Natural killer cell (primary cell): ENCODE measurements at regions of chr4 and their contacts with region 1.

Region 1: DNA sequence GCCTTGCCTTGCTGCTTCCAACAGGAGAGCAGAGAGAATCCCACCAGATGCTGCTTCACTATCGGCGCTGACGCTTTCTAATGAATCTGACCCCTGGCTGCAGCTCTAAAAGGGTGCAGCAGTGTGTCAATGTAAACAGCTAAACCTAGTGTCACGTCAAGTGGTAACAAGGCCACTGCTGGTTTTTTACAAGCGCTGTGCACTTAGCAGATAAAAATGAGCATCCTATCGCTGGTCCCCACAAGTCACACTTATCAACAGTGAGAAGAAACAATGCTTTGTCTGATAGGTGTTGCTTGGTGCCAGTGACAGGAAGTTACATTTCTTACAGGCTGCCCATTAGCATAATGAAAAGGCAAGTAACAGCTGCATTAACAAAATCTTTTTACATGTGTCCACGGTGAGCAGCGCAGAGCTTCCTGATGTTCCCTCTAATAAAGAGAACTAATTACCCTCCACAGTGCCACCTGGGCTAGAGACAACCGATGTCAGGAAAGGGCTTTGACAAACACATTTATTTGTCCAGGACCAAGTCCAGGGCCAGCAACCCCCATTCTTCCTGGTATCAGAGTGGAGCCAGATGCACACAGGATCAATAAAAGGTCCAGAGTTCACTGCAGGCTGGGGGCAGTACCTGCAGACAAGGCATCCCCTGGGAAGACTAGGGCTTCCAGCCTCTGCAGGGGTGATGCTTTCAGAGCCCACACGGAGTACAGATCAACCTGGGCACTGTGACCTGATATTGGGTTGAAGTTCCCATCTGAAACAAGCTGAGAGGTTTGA is 176.0 kb downstream of the MGST2 start:
- DNase-seq: peak; percentile 17 to 48
- ATAC-seq: peak; percentile 93 to 97 (median 96)
- H3K4me3 ChIP-seq: no peak overlapping the region
- H3K4me3 Mint-ChIP-seq: peak overlapping the region; percentile 91
- H3K27ac ChIP-seq: peak overlapping the region; percentile 57
- H3K27ac Mint-ChIP-seq: peak overlapping the region; percentile 92 to 94
- H3K4me1 ChIP-seq: peaks cover 31% of the 10 kb centered on the region
- H3K4me1 Mint-ChIP-seq: peaks cover 39 to 45% of the 10 kb centered on the region in 2 donors
- H3K27me3 ChIP-seq: no peaks in the 10 kb centered on the region
- H3K27me3 Mint-ChIP-seq: no peaks in the 10 kb centered on the region
- CTCF ChIP-seq: peak; percentile 18

Region 2: GRCh38 chr4:139530833-139531427 is 310.7 kb before region 1 on chr4:
- intact Hi-C with region 1: no loop called
- DNase-seq: peak; percentile 46 to 77
- ATAC-seq: peak; percentile 53 to 66 (median 63)
- H3K4me3 ChIP-seq: no peak overlapping the region
- H3K4me3 Mint-ChIP-seq: no peak overlapping the region
- H3K27ac ChIP-seq: no peak overlapping the region
- H3K27ac Mint-ChIP-seq: no peak overlapping the region
- H3K4me1 ChIP-seq: peaks cover 13% of the 10 kb centered on the region
- H3K4me1 Mint-ChIP-seq: peaks cover 23 to 42% of the 10 kb centered on the region in 2 donors
- H3K27me3 ChIP-seq: no peaks in the 10 kb centered on the region
- H3K27me3 Mint-ChIP-seq: peaks cover 0 to 3% of the 10 kb centered on the region in 2 donors
- CTCF ChIP-seq: peak; percentile 82

Region 3: DNA sequence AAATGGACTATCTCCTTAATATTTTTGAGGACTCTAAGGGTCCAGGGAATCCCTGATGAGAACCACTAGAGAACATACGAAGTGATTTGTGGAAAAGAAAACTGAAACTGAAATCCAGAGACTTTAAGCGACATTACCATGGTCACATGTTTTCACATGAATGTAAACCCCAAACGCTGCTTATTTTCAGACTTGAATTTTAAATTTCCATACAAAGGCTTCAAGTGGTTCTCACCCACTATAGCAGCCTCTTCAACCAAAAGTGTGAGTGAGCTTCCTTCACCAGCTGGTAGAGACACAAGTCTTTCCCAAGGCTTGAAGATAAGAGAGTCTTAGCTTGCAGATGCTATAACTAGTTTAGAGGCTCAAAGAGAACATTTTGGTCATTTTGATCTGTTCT is 56.6 kb after region 1 on chr4:
- intact Hi-C with region 1: loop called (anchors 1 kb)
- DNase-seq: peak in 1 of 2 donors; percentile 12
- ATAC-seq: peak; percentile 69 to 90 (median 80)
- H3K4me3 ChIP-seq: peak overlapping the region; percentile 25
- H3K4me3 Mint-ChIP-seq: no peak overlapping the region
- H3K27ac ChIP-seq: peak overlapping the region; percentile 60
- H3K27ac Mint-ChIP-seq: no peak overlapping the region
- H3K4me1 ChIP-seq: peaks cover 5% of the 10 kb centered on the region
- H3K4me1 Mint-ChIP-seq: no peaks in the 10 kb centered on the region
- H3K27me3 ChIP-seq: no peaks in the 10 kb centered on the region
- H3K27me3 Mint-ChIP-seq: no peaks in the 10 kb centered on the region
- CTCF ChIP-seq: no peak

Region 4: GRCh38 chr4:139978692-139979091 is 137.0 kb after region 1 on chr4:
- intact Hi-C with region 1: no loop called
- DNase-seq: peak in 1 of 2 donors; percentile 3
- ATAC-seq: peak in 1 of 3 donors; percentile 37
- H3K4me3 ChIP-seq: no peak overlapping the region
- H3K4me3 Mint-ChIP-seq: no peak overlapping the region
- H3K27ac ChIP-seq: no peak overlapping the region
- H3K27ac Mint-ChIP-seq: peak overlapping the region in 1 of 2 donors; percentile 14
- H3K4me1 ChIP-seq: peaks cover 27% of the 10 kb centered on the region
- H3K4me1 Mint-ChIP-seq: peaks cover 11 to 23% of the 10 kb centered on the region in 2 donors
- H3K27me3 ChIP-seq: no peaks in the 10 kb centered on the region
- H3K27me3 Mint-ChIP-seq: peaks cover under 1 to 6% of the 10 kb centered on the region in 2 donors
- CTCF ChIP-seq: no peak